Heart right ventricle (tissue), 16 donors: ENCODE measurements at regions of chr7 and their contacts with region 1.

Region 1: GRCh38 chr7:108497082-108497725 is 28.7 kb downstream of the PNPLA8 start:
- DNase-seq: peak in 1 of 2 donors; percentile 23
- ATAC-seq: peak in 2 of 8 donors; percentile 33 to 41
- H3K4me3 ChIP-seq: no peak overlapping the region
- H3K27ac ChIP-seq: no peak overlapping the region
- H3K4me1 ChIP-seq: no peaks in the 10 kb centered on the region
- H3K27me3 ChIP-seq: no peaks in the 10 kb centered on the region
- CTCF ChIP-seq: peak; percentile 66 to 89 (median 85)

Region 2: GRCh38 chr7:107917763-107918651 is 579.2 kb before region 1 on chr7:
- intact Hi-C with region 1: loop called in 1 of 10 experiments (anchors 5 kb)
- DNase-seq: no peak
- ATAC-seq: peak in 3 of 8 donors; percentile 42 to 80 (median 47)
- H3K4me3 ChIP-seq: no peak overlapping the region
- H3K27ac ChIP-seq: peak overlapping the region in 1 of 10 donors; percentile 1
- H3K4me1 ChIP-seq: peaks cover 0 to 35% (median 9%) of the 10 kb centered on the region in 9 donors
- H3K27me3 ChIP-seq: no peaks in the 10 kb centered on the region
- CTCF ChIP-seq: no peak

Region 3: DNA sequence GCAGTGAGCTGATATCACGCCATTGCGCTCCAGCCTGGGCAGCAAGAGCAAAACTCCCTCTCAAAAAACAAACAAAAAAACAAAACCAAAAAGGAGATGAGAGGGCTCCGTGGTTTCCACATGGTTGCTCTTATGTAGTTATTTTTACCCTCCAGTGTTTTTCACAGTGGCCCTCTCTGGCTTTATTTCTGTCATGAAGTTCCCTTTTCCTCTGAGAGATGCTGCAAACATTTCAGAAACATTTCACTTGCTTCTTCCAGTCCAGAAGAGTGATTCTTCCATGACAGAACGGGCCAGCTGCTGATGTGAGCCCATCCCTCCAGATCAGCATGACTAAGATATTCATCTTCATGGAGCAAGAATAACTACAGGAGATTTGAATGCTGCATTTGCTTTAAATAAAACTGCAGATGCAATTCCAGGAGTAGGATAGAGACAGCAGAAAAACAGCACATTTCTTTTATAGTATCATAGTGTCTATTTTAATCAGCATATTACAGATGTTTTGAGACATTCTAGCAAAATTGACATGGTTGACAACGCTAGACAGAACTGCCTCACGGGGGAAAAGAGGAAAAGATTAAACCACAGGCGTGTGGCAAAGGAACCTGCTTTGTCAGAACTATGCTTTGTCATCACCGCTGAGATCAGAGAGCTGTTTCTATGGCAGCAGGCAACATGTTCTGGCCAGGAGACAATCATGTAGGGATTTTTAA is 81.2 kb before region 1 on chr7:
- intact Hi-C with region 1: no loop called
- DNase-seq: no peak
- ATAC-seq: no peak
- H3K4me3 ChIP-seq: no peak overlapping the region
- H3K27ac ChIP-seq: no peak overlapping the region
- H3K4me1 ChIP-seq: peaks cover 0 to 8% (median 0%) of the 10 kb centered on the region in 9 donors
- H3K27me3 ChIP-seq: peaks cover 0 to 34% (median 13%) of the 10 kb centered on the region in 7 donors
- CTCF ChIP-seq: no peak